ENCODE measurements at regions of chr1 and their contacts with region 1.

Region 1: GRCh38 chr1:168637350-168637991 is 61.1 kb downstream of the XCL1 start:
- DNase-seq: no peak
- ATAC-seq: peak in 7 of 8 donors; percentile 29 to 65 (median 47)
- H3K4me3 ChIP-seq: no peak overlapping the region
- H3K27ac ChIP-seq: peak overlapping the region in 8 of 10 donors; percentile 36 to 66 (median 48)
- H3K4me1 ChIP-seq: peaks cover 0 to 14% (median 0%) of the 10 kb centered on the region in 9 donors
- H3K27me3 ChIP-seq: no peaks in the 10 kb centered on the region
- CTCF ChIP-seq: peak; percentile 36 to 69 (median 58)

Region 2: DNA sequence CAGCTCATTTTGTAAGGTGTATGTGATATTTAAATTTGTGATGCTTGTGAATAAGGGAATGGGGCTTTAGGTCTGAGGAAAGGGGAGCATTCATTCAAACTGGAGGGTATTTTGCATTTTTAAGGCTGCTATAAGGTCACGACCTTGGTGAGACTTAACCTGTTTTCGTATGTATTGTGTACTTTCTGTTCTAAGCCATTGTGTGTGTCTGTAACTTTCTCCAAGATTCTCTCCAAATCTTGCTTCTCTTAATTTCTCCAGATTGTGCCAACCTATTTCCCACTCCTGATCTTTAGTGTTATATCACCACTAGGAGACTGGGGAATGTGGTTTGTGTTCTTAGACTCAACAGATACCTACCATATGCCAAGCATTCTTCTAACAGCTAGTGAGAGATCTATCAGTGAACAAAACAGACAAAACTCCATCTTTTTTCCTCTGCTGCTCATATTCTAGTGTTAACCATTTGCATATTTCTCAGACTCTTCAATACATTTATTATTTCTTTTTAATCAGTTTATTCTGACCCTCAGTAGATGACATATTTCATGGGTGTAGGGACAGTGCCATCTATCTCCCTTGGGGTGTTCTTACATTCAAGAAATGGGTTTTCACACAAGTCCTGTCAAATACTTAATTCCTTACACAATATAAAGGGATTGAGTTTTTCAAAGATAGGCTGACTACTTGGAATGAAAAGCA is 496.5 kb after region 1 on chr1:
- intact Hi-C with region 1: loop called in 2 of 10 experiments (anchors 10 kb)
- DNase-seq: no peak
- ATAC-seq: peak in 3 of 8 donors; percentile 45 to 57 (median 52)
- H3K4me3 ChIP-seq: no peak overlapping the region
- H3K27ac ChIP-seq: peak overlapping the region in 1 of 10 donors; percentile 10
- H3K4me1 ChIP-seq: peaks cover 0 to 44% (median 11%) of the 10 kb centered on the region in 9 donors
- H3K27me3 ChIP-seq: no peaks in the 10 kb centered on the region
- CTCF ChIP-seq: peak in 6 of 9 donors; percentile 21 to 58 (median 42)

Measured in heart right ventricle (tissue), 16 donors.